Ascending aorta (tissue), 2 donors: ENCODE measurements at regions of chr16 and their contacts with region 1.

Region 1: GRCh38 chr16:30805370-30806169 is 18.6 kb upstream of the ZNF629 start:
- DNase-seq: peak; percentile 20 to 90
- H3K4me3 ChIP-seq: peak overlapping the region; percentile 81 to 82
- H3K27ac ChIP-seq: peak overlapping the region; percentile 92
- H3K4me1 ChIP-seq: peaks cover 0 to 12% of the 10 kb centered on the region in 2 donors
- H3K27me3 ChIP-seq: no peaks in the 10 kb centered on the region
- CTCF ChIP-seq: peak in 1 of 3 experiments; percentile 5

Region 2: GRCh38 chr16:30758988-30759521 is 46.5 kb before region 1 on chr16:
- intact Hi-C with region 1: no loop called
- DNase-seq: no peak
- H3K4me3 ChIP-seq: no peak overlapping the region
- H3K27ac ChIP-seq: no peak overlapping the region
- H3K4me1 ChIP-seq: peaks cover 16 to 18% of the 10 kb centered on the region in 2 donors
- H3K27me3 ChIP-seq: no peaks in the 10 kb centered on the region
- CTCF ChIP-seq: no peak

Region 3: DNA sequence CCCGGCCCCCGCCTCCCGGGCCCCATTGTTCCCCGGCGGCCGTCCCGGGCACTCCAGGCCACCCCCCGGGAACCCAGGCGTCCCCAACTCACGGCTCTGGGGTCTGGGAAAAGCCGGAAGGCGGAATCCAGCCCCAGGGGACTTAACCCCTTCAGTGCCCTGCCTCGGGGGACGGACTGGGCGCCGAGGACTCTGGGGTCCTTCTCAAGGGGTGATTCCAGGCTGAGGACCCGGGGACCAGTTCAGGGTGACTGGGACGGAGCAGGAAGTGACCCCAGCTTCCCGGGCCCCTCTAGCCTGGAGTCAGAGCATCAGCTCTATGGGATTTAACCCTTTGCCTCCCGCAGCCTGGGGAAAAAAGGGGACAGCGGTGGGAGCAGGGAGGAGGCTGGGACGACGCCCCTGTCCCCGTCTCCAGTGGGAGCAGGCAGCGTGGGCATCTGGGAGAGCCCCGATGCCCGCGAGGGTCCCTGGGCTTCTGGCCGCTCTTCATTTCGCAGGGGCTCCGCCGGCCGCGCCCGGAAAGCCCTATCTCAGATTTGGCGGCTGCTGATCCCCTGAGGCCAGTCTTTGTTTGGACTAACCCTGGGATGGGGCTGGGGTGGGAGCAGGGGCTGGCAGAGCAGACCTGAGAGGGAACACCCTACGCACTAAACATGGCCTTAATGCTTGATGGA is 18.5 kb before region 1 on chr16 and contains the start of gene ZNF629:
- intact Hi-C with region 1: loop called (anchors 1 kb)
- DNase-seq: peak in 1 of 2 donors; percentile 85
- H3K4me3 ChIP-seq: peak within 1 kb of the TSS; percentile 86
- H3K27ac ChIP-seq: peak within 1 kb of the TSS; percentile 87 to 89
- H3K4me1 ChIP-seq: peaks cover 4 to 7% of the 10 kb centered on the region in 2 donors
- H3K27me3 ChIP-seq: no peaks in the 10 kb centered on the region
- CTCF ChIP-seq: no peak
- total RNA-seq, gene ZNF629: 12.3 TPM

Region 4: GRCh38 chr16:30838876-30839471 is 33.4 kb after region 1 on chr16:
- intact Hi-C with region 1: no loop called
- DNase-seq: no peak
- H3K4me3 ChIP-seq: no peak overlapping the region
- H3K27ac ChIP-seq: no peak overlapping the region
- H3K4me1 ChIP-seq: no peaks in the 10 kb centered on the region
- H3K27me3 ChIP-seq: no peaks in the 10 kb centered on the region
- CTCF ChIP-seq: no peak

Region 5: DNA sequence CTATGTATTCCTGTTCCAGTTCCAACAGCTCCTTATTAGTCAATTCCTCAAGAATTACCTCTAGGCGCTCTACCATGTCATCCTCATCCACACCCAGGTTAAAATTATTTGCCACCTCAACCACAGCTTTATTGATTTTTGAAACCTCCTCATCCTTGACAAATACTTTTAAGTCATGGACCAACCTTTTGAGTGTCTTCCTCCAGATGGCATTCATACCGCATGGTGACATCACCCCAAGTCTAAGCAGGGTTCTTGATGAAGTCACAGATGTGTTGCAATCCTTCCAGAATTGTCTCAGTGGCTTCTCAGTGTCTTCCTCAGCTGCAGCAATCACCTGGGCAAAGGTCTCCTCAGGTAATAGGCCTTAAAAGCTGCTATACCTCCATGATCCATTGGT is 48.2 kb after region 1 on chr16:
- intact Hi-C with region 1: no loop called
- DNase-seq: no peak
- H3K4me3 ChIP-seq: no peak overlapping the region
- H3K27ac ChIP-seq: peak overlapping the region in 1 of 2 donors; percentile 40
- H3K4me1 ChIP-seq: peaks cover 0 to 5% of the 10 kb centered on the region in 2 donors
- H3K27me3 ChIP-seq: no peaks in the 10 kb centered on the region
- CTCF ChIP-seq: no peak

Region 6: GRCh38 chr16:30893417-30893743 is 87.8 kb after region 1 on chr16:
- intact Hi-C with region 1: no loop called
- DNase-seq: peak in 1 of 2 donors; percentile 67
- H3K4me3 ChIP-seq: peak overlapping the region; percentile 87 to 93
- H3K27ac ChIP-seq: peak overlapping the region; percentile 90 to 94
- H3K4me1 ChIP-seq: peaks cover 17 to 32% of the 10 kb centered on the region in 2 donors
- H3K27me3 ChIP-seq: no peaks in the 10 kb centered on the region
- CTCF ChIP-seq: no peak